Transverse colon (tissue), 4 donors: ENCODE measurements at regions of chr4 and their contacts with region 1.

Region 1: DNA sequence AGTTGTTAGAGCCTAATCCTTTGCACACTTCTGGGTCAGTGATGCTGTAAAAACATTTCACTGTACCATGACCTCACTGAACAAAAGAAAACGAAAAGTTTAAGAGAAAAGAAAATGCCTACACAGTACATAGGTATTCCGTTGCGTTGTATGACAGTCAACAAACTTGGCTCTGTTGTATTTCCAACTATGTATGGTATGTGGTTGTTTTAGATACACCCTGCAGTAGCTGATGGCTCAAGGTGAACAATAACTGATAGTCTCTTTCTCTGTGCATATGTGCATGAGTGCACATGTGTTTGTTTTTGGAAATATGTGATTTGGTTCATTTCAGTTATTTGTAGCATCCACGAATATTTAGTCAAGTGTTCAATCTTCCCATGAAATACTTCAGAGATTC is 176.0 kb downstream of the BMPR1B start:
- DNase-seq: no peak
- H3K4me3 ChIP-seq: no peak overlapping the region
- H3K27ac ChIP-seq: no peak overlapping the region
- H3K4me1 ChIP-seq: no peaks in the 10 kb centered on the region
- H3K27me3 ChIP-seq: no peaks in the 10 kb centered on the region
- CTCF ChIP-seq: no peak
- EP300 ChIP-seq: no peak
- POLR2A ChIP-seq: no peak

Region 2: GRCh38 chr4:94957030-94957429 is 23.2 kb after region 1 on chr4:
- in situ Hi-C with region 1: no loop called
- intact Hi-C with region 1: loop called (anchors 1 kb)
- DNase-seq: no peak
- H3K4me3 ChIP-seq: no peak overlapping the region
- H3K27ac ChIP-seq: no peak overlapping the region
- H3K4me1 ChIP-seq: no peaks in the 10 kb centered on the region
- H3K27me3 ChIP-seq: no peaks in the 10 kb centered on the region
- CTCF ChIP-seq: no peak
- EP300 ChIP-seq: no peak
- POLR2A ChIP-seq: no peak